Right ventricle myocardium inferior (tissue), 1 donor: ENCODE measurements at regions of chr15 and their contacts with region 1.

Region 1: DNA sequence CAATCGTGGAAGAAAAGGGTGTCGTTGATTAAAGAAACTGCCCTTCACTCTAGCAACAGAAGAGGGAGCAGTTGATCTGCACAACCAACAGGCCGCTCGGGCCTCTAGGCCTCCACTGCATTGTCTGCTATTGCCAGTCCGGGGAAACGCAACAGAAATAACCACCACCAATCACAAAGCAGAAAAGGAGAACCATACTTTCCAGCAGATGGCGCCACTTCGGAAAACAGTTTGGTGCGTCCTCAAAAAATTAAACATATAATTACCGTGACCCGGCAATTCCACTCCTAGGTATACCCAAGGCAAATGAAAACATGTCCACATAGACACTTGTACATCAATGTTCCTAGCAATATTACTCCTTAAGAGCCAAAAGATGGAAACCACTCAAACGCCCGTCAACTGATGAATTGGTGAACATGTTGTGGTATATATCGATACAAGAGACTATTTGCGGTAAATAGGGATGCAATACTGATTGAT is 154.1 kb downstream of the TJP1 start:
- DNase-seq: peak; percentile 68
- ATAC-seq: peak; percentile 72

Region 2: GRCh38 chr15:29731865-29732264 is 63.7 kb after region 1 on chr15:
- intact Hi-C with region 1: no loop called
- DNase-seq: no peak
- ATAC-seq: no peak

Region 3: GRCh38 chr15:29747837-29748417 is 79.8 kb after region 1 on chr15:
- intact Hi-C with region 1: no loop called
- DNase-seq: no peak
- ATAC-seq: no peak

Region 4: DNA sequence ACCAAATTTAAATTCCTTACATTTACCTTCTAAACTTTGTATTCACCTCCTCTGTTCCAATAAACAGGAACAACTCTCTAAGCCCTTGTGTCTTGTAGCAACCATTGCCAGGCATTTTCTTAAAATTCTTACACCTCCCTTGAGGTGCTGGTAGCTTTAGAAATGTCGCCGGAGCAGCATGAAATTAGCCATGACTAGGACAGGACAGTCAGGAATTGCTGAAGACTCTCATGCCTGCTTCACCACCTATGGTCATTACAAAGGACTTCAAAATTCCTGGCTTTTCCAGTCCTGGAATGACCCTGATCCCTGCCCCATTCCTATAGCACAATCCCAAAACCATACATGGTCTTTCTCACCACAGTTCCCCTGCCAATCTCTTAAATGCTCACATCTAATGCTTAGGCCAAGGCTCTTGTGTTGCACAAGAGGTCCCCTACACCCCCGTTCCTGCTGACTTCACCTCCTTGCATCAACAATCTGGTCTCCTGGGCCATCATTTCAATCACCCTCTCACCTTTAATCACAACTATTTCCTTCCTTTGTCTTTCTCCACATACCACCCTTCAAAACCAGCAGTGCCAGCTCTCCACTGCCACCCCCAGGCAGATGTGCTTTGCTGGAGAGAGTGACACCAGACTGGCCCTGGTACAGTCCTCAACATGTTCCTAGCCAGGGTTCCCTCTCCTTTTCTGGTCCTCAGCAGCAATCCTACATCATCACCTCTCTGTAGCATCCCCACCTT is 267.3 kb after region 1 on chr15:
- intact Hi-C with region 1: loop called (anchors 5 kb)
- DNase-seq: no peak
- ATAC-seq: no peak